Right cardiac atrium (tissue), 5 donors: ENCODE measurements at regions of chr1 and their contacts with region 1.

Region 1: DNA sequence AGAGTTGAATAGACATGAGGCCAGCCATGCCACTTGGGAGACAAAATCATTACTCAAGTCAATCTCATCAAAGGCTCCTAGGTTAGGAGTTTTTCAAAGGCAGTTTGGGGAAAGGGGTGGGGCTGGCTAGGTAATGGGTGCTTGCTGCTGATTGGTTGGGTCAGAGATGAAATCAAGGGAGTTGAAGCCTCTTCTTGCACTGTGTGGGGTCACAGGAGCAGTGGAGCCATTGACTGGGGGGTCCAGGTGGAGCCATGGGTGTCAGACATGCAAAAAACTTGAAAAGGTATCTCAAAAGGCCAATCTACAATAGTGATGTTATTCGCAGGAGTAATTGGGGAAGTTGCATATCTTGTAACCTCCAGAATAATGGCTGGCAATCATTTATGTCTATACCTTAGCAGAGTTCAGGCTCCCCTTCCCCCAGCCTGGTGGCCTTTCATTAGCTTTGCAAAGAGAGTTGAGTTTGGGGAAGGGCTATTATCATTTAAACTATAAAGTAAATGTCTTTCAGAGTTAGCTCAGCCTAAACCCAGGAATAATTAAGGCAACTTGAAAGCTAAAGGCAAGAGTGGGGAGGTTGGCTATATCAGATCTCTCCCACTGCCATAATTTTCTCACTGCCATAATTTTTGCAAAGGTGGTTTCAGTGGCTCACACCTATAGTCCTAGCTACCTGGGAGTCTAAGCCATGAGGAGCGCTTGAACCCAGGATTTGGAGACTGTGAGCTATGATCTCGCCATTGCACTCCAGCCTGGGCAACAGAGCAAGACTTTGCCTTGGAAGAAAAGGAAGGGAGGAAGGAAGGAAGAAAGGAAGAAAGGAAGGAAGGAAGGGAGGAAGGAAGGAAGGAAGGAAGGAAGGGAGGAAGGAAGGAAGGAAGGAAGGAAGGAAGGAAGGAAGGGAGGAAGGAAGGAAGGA is 7.8 kb upstream of the PINK1 start:
- DNase-seq: no peak
- ATAC-seq: no peak
- H3K4me3 ChIP-seq: no peak overlapping the region
- H3K27ac ChIP-seq: no peak overlapping the region
- H3K4me1 ChIP-seq: no peaks in the 10 kb centered on the region
- H3K27me3 ChIP-seq: no peaks in the 10 kb centered on the region

Region 2: GRCh38 chr1:20528221-20528620 is 97.2 kb before region 1 on chr1:
- intact Hi-C with region 1: loop called in 1 of 4 experiments (anchors 5 kb)
- DNase-seq: peak in 1 of 3 donors; percentile 56
- ATAC-seq: no peak
- H3K4me3 ChIP-seq: no peak overlapping the region
- H3K27ac ChIP-seq: no peak overlapping the region
- H3K4me1 ChIP-seq: no peaks in the 10 kb centered on the region
- H3K27me3 ChIP-seq: no peaks in the 10 kb centered on the region

Region 3: DNA sequence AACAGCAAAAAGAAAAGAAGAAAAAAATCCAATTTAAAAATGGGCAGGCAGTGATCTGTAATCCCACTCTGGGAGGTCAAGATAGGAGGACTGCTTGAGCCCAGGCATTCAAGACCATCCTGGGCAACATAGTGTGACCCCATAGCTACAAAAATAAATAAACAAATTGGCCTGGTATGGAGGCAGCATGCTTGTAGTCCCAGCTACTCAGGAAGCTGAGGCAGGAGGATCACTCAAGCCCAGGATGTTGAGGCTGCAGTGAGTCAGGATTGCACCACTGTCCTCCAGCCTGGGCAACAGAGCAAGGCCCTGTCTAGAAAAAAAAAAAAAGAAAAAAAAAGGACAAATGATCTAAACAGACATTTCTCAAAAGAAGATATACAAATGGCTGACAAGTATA is 451.6 kb after region 1 on chr1:
- intact Hi-C with region 1: no loop called
- DNase-seq: peak in 1 of 3 donors; percentile 25
- ATAC-seq: peak in 1 of 2 donors; percentile 67
- H3K4me3 ChIP-seq: no peak overlapping the region
- H3K27ac ChIP-seq: no peak overlapping the region
- H3K4me1 ChIP-seq: no peaks in the 10 kb centered on the region
- H3K27me3 ChIP-seq: no peaks in the 10 kb centered on the region